ENCODE measurements at regions of chr17 and their contacts with region 1.

Region 1: GRCh38 chr17:4625181-4625617 is 16.3 kb downstream of the ALOX15 start:
- DNase-seq: no peak
- H3K4me3 ChIP-seq: no peak overlapping the region
- H3K4me3 Mint-ChIP-seq: no peak overlapping the region
- H3K27ac ChIP-seq: no peak overlapping the region
- H3K27ac Mint-ChIP-seq: no peak overlapping the region
- H3K4me1 ChIP-seq: no peaks in the 10 kb centered on the region
- H3K4me1 Mint-ChIP-seq: no peaks in the 10 kb centered on the region
- H3K27me3 ChIP-seq: no peaks in the 10 kb centered on the region
- H3K27me3 Mint-ChIP-seq: peaks cover 7 to 11% of the 10 kb centered on the region in 2 donors

Region 2: GRCh38 chr17:4420692-4421131 is 204.5 kb before region 1 on chr17:
- CTCF ChIA-PET with region 1: interaction called, 25 read pairs
- POLR2A ChIA-PET with region 1: interaction called, 3 read pairs
- DNase-seq: peak; percentile 16 to 72 (median 61)
- H3K4me3 ChIP-seq: no peak overlapping the region
- H3K4me3 Mint-ChIP-seq: no peak overlapping the region
- H3K27ac ChIP-seq: no peak overlapping the region
- H3K27ac Mint-ChIP-seq: no peak overlapping the region
- H3K4me1 ChIP-seq: no peaks in the 10 kb centered on the region
- H3K4me1 Mint-ChIP-seq: peaks cover 0 to 4% (median 3%) of the 10 kb centered on the region in 3 donors
- H3K27me3 ChIP-seq: no peaks in the 10 kb centered on the region
- H3K27me3 Mint-ChIP-seq: no peaks in the 10 kb centered on the region

Region 3: DNA sequence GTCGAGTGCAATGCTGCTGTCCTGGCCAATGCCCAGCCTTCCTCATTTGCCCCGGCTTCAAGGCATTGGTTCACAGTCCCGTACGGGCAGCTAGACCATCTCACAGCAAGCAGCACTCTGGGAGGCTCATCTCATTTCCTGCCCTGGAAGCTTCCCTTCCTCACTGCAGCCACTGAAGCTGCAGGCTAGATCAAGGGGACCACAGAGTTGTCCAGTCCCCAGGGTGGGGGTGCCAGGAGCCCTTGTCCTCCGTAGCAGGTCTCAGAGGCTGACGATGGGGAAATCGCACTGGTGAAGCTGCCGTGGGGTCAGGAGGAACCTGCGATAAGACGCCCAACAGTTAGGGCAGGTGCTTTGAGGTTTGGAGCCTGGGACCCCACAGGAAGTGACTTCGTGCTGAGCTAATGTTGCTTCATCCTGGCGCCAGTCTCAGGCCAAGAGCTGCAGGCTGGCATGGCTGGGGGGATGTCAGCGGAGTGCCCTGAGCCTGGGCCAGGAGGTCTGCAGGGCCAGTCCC is 191.6 kb before region 1 on chr17 and contains the start of gene SPNS3:
- CTCF ChIA-PET with region 1: no interaction called
- POLR2A ChIA-PET with region 1: no interaction called
- DNase-seq: peak; percentile 6 to 54 (median 38)
- H3K4me3 ChIP-seq: peak within 1 kb of the TSS; percentile 55
- H3K4me3 Mint-ChIP-seq: peak within 1 kb of the TSS in 6 of 7 donors; percentile 54 to 80 (median 68)
- H3K27ac ChIP-seq: no peak within 1 kb of the TSS
- H3K27ac Mint-ChIP-seq: peak within 1 kb of the TSS in 7 of 8 donors; percentile 52 to 96 (median 79)
- H3K4me1 ChIP-seq: peaks cover 17% of the 10 kb centered on the region
- H3K4me1 Mint-ChIP-seq: peaks cover 25 to 37% (median 25%) of the 10 kb centered on the region in 3 donors
- H3K27me3 ChIP-seq: no peaks in the 10 kb centered on the region
- H3K27me3 Mint-ChIP-seq: peaks cover 0 to 2% of the 10 kb centered on the region in 2 donors
- total RNA-seq, gene SPNS3: 7.3 to 7.5 TPM

Region 4: GRCh38 chr17:4565209-4566141 is 59.7 kb before region 1 on chr17:
- CTCF ChIA-PET with region 1: interaction called, 20 read pairs
- POLR2A ChIA-PET with region 1: no interaction called
- DNase-seq: peak; percentile 21 to 66 (median 39)
- H3K4me3 ChIP-seq: no peak overlapping the region
- H3K4me3 Mint-ChIP-seq: peak overlapping the region in 6 of 7 donors; percentile 41 to 76 (median 61)
- H3K27ac ChIP-seq: no peak overlapping the region
- H3K27ac Mint-ChIP-seq: peak overlapping the region in 3 of 8 donors; percentile 23 to 90 (median 26)
- H3K4me1 ChIP-seq: peaks cover 17% of the 10 kb centered on the region
- H3K4me1 Mint-ChIP-seq: peaks cover 14 to 28% (median 25%) of the 10 kb centered on the region in 3 donors
- H3K27me3 ChIP-seq: no peaks in the 10 kb centered on the region
- H3K27me3 Mint-ChIP-seq: peaks cover 3 to 5% of the 10 kb centered on the region in 2 donors

Region 5: GRCh38 chr17:4696437-4696805 is 71.2 kb after region 1 on chr17:
- CTCF ChIA-PET with region 1: no interaction called
- POLR2A ChIA-PET with region 1: no interaction called
- DNase-seq: peak in 1 of 5 donors; percentile 53
- H3K4me3 ChIP-seq: peak overlapping the region; percentile 16
- H3K4me3 Mint-ChIP-seq: peak overlapping the region; percentile 72 to 85 (median 77)
- H3K27ac ChIP-seq: peak overlapping the region; percentile 67
- H3K27ac Mint-ChIP-seq: peak overlapping the region; percentile 92 to 99 (median 96)
- H3K4me1 ChIP-seq: peaks cover 18% of the 10 kb centered on the region
- H3K4me1 Mint-ChIP-seq: peaks cover 28 to 63% (median 29%) of the 10 kb centered on the region in 3 donors
- H3K27me3 ChIP-seq: no peaks in the 10 kb centered on the region
- H3K27me3 Mint-ChIP-seq: no peaks in the 10 kb centered on the region

Region 6: DNA sequence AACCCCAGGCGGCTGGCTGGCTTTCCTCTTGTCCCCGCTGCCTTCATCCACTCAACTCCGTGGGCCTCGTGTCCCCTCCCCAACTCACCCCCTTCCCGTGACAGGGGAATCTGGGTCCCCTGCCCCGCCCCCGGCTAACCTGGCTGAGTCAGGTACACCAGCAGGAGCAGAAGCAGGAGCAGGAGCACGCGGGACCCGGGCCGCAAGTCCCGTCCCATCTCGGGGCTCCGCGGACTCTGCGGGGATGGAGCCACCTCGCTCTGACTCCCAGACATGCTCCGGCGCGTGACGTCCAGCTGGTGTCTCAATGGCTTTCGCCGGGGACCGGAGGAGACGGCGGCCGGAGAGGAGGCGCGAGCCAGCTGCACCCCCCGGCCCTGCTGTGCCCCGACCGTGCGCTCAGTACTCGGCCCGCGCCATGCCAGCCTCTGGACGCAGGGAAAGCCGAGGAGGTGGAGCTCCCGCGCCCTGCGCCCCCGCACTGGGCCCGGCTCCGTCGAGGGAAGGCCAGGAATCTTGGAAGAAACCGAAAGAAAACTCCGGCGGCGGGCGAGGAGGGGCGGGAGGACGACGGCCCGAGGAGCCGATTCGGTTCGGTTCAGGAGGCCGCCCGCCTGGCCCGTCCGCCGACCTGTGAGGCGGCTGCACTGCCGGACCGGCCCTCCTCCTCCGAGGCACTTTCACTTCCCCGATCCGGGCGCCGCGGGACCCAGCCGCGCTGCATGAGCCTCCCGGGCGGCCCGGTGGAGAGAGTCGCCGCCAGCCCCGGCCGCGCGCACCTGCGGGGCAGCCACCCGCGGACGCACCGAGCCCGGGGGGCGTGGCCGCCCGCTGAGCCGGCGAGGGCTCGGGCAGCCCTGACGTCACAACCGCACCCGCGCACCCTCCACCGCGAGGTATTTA is 114.2 kb after region 1 on chr17 and contains the starts of genes CXCL16 and ZMYND15:
- CTCF ChIA-PET with region 1: no interaction called
- POLR2A ChIA-PET with region 1: no interaction called
- DNase-seq: peak; percentile 53 to 77 (median 69)
- H3K4me3 ChIP-seq: peak within 1 kb of the TSS; percentile 75
- H3K4me3 Mint-ChIP-seq: peak within 1 kb of the TSS; percentile 90 to 96 (median 94)
- H3K27ac ChIP-seq: no peak within 1 kb of the TSS
- H3K27ac Mint-ChIP-seq: peak within 1 kb of the TSS; percentile 36 to 96 (median 90)
- H3K4me1 ChIP-seq: peaks cover 18% of the 10 kb centered on the region
- H3K4me1 Mint-ChIP-seq: peaks cover 17 to 19% (median 18%) of the 10 kb centered on the region in 3 donors
- H3K27me3 ChIP-seq: peaks cover 10% of the 10 kb centered on the region
- H3K27me3 Mint-ChIP-seq: peaks cover 14% of the 10 kb centered on the region in 2 donors
- total RNA-seq, gene CXCL16: 2.4 to 2.8 TPM
- total RNA-seq, gene ZMYND15: 0.09 TPM in 1 of 2 experiments, not detected in the other

Region 7: GRCh38 chr17:4920351-4921048 is 295.3 kb after region 1 on chr17:
- CTCF ChIA-PET with region 1: no interaction called
- POLR2A ChIA-PET with region 1: no interaction called
- DNase-seq: no peak
- H3K4me3 ChIP-seq: no peak overlapping the region
- H3K4me3 Mint-ChIP-seq: no peak overlapping the region
- H3K27ac ChIP-seq: no peak overlapping the region
- H3K27ac Mint-ChIP-seq: no peak overlapping the region
- H3K4me1 ChIP-seq: no peaks in the 10 kb centered on the region
- H3K4me1 Mint-ChIP-seq: peaks cover 0 to 1% (median 0%) of the 10 kb centered on the region in 3 donors
- H3K27me3 ChIP-seq: no peaks in the 10 kb centered on the region
- H3K27me3 Mint-ChIP-seq: no peaks in the 10 kb centered on the region

Measured in CD8-positive, alpha-beta memory T cell (primary cell).